Panc1 (cell line): ENCODE measurements at regions of chrX and their contacts with region 1.

Region 1: GRCh38 chrX:129876771-129877305 is 29.1 kb upstream of the UTP14A start:
- DNase-seq: no peak
- ATAC-seq: peak; percentile 60; the same call in 1 of the 2 replicates
- H3K4me3 ChIP-seq: no peak overlapping the region
- H3K27ac ChIP-seq: no peak overlapping the region
- H3K4me1 ChIP-seq: no peaks in the 10 kb centered on the region; the same call in 1 of the 2 replicates
- H3K27me3 ChIP-seq: no peaks in the 10 kb centered on the region
- CTCF ChIP-seq: no peak

Region 2: GRCh38 chrX:129900054-129900453 is 23.2 kb after region 1 on chrX:
- CTCF ChIA-PET with region 1: interaction called, 10 read pairs
- POLR2A ChIA-PET with region 1: no interaction called
- in situ Hi-C with region 1: no loop called
- intact Hi-C with region 1: no loop called
- DNase-seq: no peak
- ATAC-seq: no peak
- H3K4me3 ChIP-seq: no peak overlapping the region
- H3K27ac ChIP-seq: no peak overlapping the region
- H3K4me1 ChIP-seq: 0 out of 2 replicates have a peak, but pooled peaks cover 4% of the 10 kb centered on the region
- H3K27me3 ChIP-seq: no peaks in the 10 kb centered on the region
- CTCF ChIP-seq: no peak

Region 3: DNA sequence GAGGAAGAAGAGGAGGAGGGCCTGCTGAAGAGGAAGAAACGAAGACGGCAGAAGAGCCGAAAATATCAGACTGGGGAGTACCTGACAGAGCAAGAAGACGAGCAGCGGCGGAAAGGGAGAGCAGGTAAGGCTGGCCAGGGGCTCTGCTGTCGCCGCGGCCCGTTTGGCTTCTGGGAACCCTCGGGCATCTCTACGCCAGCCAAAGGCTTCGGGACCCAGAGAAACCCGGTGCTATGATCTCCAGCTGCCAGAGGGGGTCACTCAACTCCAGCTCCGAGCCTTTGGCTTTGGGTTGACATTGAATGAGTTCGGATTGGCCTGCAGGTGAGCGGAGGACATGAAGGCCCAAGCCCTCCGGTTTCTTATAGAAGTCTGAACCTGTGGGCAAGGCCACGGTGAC is 148.4 kb after region 1 on chrX:
- CTCF ChIA-PET with region 1: no interaction called
- POLR2A ChIA-PET with region 1: no interaction called
- in situ Hi-C with region 1: no loop called
- intact Hi-C with region 1: no loop called
- DNase-seq: no peak
- ATAC-seq: no peak
- H3K4me3 ChIP-seq: no peak overlapping the region
- H3K27ac ChIP-seq: no peak overlapping the region
- H3K4me1 ChIP-seq: no peaks in the 10 kb centered on the region
- H3K27me3 ChIP-seq: no peaks in the 10 kb centered on the region
- CTCF ChIP-seq: no peak

Region 4: DNA sequence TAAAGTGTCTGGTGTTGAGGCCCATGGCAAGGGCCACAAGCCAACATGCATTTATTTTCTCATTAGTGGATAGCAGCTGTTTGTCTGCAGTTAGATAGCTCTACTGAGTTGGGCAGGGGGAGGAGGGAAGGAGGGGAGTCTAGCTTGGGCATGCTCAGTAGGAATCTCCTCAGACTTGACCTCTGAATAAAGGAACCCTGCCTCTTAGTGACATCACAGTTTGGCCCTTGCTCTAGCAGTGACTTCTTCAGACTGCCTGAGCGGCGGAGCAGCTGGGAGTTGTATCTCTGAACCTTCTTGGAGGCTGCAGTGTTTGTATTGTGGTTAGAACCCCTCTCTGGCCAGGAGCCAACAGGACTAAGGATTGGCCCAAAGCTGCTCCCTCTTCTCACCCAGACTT is 163.0 kb after region 1 on chrX:
- CTCF ChIA-PET with region 1: no interaction called
- POLR2A ChIA-PET with region 1: interaction called, 12 read pairs
- in situ Hi-C with region 1: no loop called
- intact Hi-C with region 1: no loop called
- DNase-seq: no peak
- ATAC-seq: no peak
- H3K4me3 ChIP-seq: no peak overlapping the region
- H3K27ac ChIP-seq: no peak overlapping the region
- H3K4me1 ChIP-seq: no peaks in the 10 kb centered on the region
- H3K27me3 ChIP-seq: no peaks in the 10 kb centered on the region
- CTCF ChIP-seq: no peak

Region 5: GRCh38 chrX:130211415-130212186 is 334.8 kb after region 1 on chrX:
- CTCF ChIA-PET with region 1: no interaction called
- POLR2A ChIA-PET with region 1: no interaction called
- in situ Hi-C with region 1: no loop called
- intact Hi-C with region 1: no loop called
- DNase-seq: no peak
- ATAC-seq: no peak
- H3K4me3 ChIP-seq: no peak overlapping the region
- H3K27ac ChIP-seq: no peak overlapping the region
- H3K4me1 ChIP-seq: no peaks in the 10 kb centered on the region
- H3K27me3 ChIP-seq: no peaks in the 10 kb centered on the region
- CTCF ChIP-seq: no peak

Region 6: DNA sequence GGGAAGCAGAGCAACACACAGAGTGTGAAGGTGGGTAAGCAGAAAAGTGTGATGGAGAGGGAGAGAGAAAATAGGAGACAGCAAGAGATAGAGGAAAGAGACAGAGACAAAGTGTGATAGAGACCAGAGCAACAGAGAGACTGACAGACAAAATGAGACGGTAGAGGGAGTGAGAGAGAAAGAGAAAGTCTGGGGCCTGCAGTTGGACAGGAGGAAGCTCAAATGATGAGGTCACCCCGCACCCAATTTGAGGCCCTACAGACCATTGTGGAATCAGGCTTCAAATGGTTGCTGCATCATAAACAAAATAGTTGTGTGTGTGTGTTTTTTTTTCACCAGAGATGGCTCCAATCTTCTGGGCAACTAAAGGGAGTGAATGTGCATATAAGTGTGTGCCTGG is 1133.3 kb after region 1 on chrX:
- CTCF ChIA-PET with region 1: no interaction called
- POLR2A ChIA-PET with region 1: no interaction called
- in situ Hi-C with region 1: no loop called
- intact Hi-C with region 1: no loop called
- DNase-seq: no peak
- ATAC-seq: no peak
- H3K4me3 ChIP-seq: no peak overlapping the region
- H3K27ac ChIP-seq: no peak overlapping the region
- H3K4me1 ChIP-seq: no peaks in the 10 kb centered on the region
- H3K27me3 ChIP-seq: peaks cover 4% of the 10 kb centered on the region
- CTCF ChIP-seq: no peak